ENCODE measurements at regions of chr9 and their contacts with region 1.

Region 1: DNA sequence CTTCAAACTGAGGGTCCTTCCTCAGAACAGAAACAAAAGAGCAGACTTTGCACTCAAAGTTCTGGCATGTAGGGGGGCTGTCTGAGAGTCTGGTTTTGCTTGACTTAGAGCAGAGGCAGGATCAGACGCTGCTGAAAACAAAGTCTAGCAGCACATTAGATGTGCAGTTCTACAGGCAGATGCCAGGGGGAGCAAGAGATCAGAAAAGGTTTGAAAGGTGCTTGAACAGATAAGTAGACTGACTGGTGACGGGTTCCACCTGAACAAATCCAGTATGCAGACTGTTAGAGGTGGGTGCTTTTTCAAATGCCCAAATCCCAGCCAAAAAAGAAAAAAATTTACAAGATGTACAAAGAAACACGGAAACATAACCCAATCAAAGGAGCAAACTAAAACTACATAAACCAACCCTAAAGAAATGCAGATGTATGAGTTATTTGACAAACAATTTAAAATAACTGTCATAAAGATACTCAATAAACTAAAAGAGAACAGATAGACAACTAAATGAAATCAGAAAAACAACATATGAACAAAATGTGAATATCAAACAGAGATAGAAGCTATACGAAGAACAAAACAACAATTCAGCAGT is 194.7 kb upstream of the FREM1 start:
- DNase-seq: peak; percentile 24 to 41
- ATAC-seq: peak; percentile 78 to 80
- H3K4me3 ChIP-seq: no peak overlapping the region
- H3K27ac ChIP-seq: no peak overlapping the region
- H3K4me1 ChIP-seq: no peaks in the 10 kb centered on the region
- CTCF ChIP-seq: peak; percentile 50
- EP300 ChIP-seq: no peak
- POLR2A ChIP-seq: no peak
- RAD21 ChIP-seq: peak; percentile 43 to 45

Region 2: GRCh38 chr9:14908295-14909180 is 196.4 kb before region 1 on chr9:
- CTCF ChIA-PET with region 1: no interaction called
- POLR2A ChIA-PET with region 1: no interaction called
- DNase-seq: no peak
- ATAC-seq: no peak
- H3K4me3 ChIP-seq: no peak overlapping the region
- H3K27ac ChIP-seq: no peak overlapping the region
- H3K4me1 ChIP-seq: no peaks in the 10 kb centered on the region
- CTCF ChIP-seq: no peak
- EP300 ChIP-seq: no peak
- POLR2A ChIP-seq: no peak
- RAD21 ChIP-seq: no peak

Region 3: DNA sequence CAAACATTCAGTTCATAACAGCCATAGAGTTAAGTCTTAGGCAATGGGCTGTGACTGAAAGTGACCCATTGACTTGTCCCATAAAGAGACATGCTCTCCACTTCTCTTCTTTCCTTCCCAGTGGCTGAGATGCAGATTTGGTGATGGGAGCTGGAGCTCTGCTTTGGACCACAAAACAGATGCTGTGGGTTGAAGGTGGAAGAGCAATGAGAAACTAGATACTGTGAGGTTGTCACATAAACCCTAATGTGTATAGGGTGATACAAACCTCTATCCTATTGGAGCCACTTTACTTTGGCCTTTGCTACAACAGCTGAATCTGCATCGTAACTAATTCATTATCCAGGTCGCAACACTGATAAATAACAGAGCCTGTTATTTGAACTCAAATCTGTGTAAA is 10.1 kb after region 1 on chr9:
- CTCF ChIA-PET with region 1: interaction called, 12 read pairs
- POLR2A ChIA-PET with region 1: no interaction called
- DNase-seq: no peak
- ATAC-seq: no peak
- H3K4me3 ChIP-seq: no peak overlapping the region
- H3K27ac ChIP-seq: no peak overlapping the region
- H3K4me1 ChIP-seq: no peaks in the 10 kb centered on the region
- CTCF ChIP-seq: no peak
- EP300 ChIP-seq: no peak
- POLR2A ChIP-seq: no peak
- RAD21 ChIP-seq: no peak

Measured in A549 (cell line).